Panc1 (cell line): ENCODE measurements at regions of chr10 and their contacts with region 1.

Region 1: GRCh38 chr10:7383442-7383841 is 27.4 kb downstream of the SFMBT2 start:
- DNase-seq: no peak
- ATAC-seq: no peak
- H3K4me3 ChIP-seq: no peak overlapping the region
- H3K27ac ChIP-seq: no peak overlapping the region
- H3K4me1 ChIP-seq: no peaks in the 10 kb centered on the region
- H3K27me3 ChIP-seq: no peaks in the 10 kb centered on the region
- CTCF ChIP-seq: no peak

Region 2: DNA sequence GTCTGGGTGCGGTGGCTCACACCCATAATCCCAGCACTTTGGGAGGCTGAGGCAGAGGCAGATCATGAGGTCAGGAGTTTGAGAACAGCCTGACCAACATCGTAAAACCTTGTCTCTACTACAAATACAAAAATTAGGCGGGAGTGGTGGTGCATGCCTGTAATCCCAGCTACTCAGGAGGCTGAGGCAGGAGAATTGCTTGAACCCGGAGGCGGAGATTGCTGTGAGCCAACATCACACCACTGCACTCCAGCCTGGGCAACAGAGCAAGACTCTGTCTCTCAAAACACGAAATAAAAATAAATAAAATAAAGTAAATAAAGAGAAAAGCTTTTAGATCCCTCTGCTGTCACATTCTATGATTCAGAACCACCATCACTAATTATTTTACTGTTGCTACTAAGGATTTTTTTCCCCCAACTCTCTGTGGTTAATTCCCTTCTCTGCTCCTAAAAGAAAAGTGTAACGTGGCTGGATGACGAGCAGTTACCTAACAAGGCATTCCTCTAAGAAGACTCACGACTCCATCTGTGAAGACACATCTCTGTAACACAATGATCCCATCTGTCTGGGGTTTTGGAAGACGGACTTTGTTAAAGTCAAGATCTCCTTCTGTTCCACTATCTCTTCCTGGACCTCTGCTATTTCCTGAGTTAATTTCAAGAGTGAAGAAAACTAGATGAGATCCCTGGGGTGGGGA is 152.6 kb before region 1 on chr10:
- CTCF ChIA-PET with region 1: no interaction called
- POLR2A ChIA-PET with region 1: no interaction called
- in situ Hi-C with region 1: no loop called
- intact Hi-C with region 1: no loop called
- DNase-seq: no peak
- ATAC-seq: no peak
- H3K4me3 ChIP-seq: no peak overlapping the region
- H3K27ac ChIP-seq: no peak overlapping the region
- H3K4me1 ChIP-seq: no peaks in the 10 kb centered on the region
- H3K27me3 ChIP-seq: no peaks in the 10 kb centered on the region
- CTCF ChIP-seq: no peak

Region 3: GRCh38 chr10:7401782-7402181 is 18.3 kb after region 1 on chr10:
- CTCF ChIA-PET with region 1: no interaction called
- POLR2A ChIA-PET with region 1: interaction called, 12 read pairs
- in situ Hi-C with region 1: no loop called
- intact Hi-C with region 1: no loop called
- DNase-seq: no peak
- ATAC-seq: no peak
- H3K4me3 ChIP-seq: no peak overlapping the region
- H3K27ac ChIP-seq: no peak overlapping the region
- H3K4me1 ChIP-seq: no peaks in the 10 kb centered on the region; the same call in 1 of the 2 replicates
- H3K27me3 ChIP-seq: no peaks in the 10 kb centered on the region; the same call in 1 of the 2 replicates
- CTCF ChIP-seq: no peak